IMR-90 (cell line): ENCODE measurements at regions of chr7 and their contacts with region 1.

Region 1: DNA sequence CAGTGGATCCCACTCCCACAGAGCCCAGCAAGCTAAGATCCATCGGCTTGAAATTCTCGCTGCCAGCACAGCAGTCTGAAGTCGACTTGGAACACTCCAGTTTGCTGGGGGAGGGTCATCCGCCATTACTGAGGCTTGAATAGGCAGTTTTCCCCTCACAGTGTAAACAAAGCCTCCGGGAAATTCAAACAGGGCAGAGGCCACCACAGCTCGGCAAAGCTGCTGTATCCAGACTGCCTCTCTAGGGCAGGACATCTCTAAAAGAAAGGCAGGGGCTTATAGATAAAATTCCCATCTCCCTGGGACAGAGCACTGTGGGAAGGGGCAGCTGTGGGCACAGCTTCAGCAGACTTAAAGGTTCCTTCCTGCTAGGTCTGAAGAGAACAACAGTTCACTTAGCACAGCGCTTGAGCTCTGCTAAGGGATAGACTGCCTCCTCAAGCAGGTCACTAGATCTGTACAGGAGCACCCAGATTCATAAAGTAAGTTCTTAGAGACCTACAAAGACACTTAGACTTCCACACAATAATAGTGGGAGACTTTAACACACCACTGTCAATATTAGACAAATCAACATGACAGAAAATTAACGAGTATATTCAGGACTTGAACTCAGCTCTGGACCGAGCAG is 141.1 kb downstream of the TFEC start:
- DNase-seq: no peak
- ATAC-seq: no peak
- H3K4me3 ChIP-seq: no peak overlapping the region
- H3K27ac ChIP-seq: no peak overlapping the region
- H3K4me1 ChIP-seq: no peaks in the 10 kb centered on the region
- H3K27me3 ChIP-seq: no peaks in the 10 kb centered on the region
- CTCF ChIP-seq: no peak
- POLR2A ChIP-seq: no peak
- RAD21 ChIP-seq: no peak

Region 2: DNA sequence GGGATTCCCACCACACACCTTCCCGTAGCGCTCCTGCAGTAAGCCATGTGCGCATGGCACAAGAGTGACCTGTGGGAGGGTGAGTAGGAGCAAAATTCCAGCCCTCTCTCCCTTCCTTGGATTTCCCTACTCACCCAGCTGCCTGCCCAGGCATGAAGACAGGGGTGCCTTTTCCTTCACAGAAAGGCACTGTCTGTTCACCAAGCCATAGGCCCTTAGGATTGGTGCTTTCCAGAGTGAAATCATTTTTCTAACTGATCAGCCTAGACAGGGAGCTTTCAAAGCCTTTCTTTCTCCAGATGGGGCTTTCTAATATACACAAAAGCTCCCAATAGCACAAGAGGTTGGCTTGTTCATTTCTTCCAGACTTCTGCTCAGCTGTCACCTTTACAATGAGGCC is 1904.1 kb after region 1 on chr7:
- CTCF ChIA-PET with region 1: no interaction called
- POLR2A ChIA-PET with region 1: interaction called, 13 read pairs
- dilution Hi-C with region 1: no loop called
- in situ Hi-C with region 1: no loop called
- intact Hi-C with region 1: no loop called
- DNase-seq: no peak
- ATAC-seq: no peak
- H3K4me3 ChIP-seq: no peak overlapping the region
- H3K27ac ChIP-seq: no peak overlapping the region
- H3K4me1 ChIP-seq: no peaks in the 10 kb centered on the region
- H3K27me3 ChIP-seq: no peaks in the 10 kb centered on the region
- CTCF ChIP-seq: no peak
- POLR2A ChIP-seq: no peak
- RAD21 ChIP-seq: no peak